CD8-positive, alpha-beta memory T cell (primary cell): ENCODE measurements at regions of chr14 and their contacts with region 1.

Region 1: GRCh38 chr14:35365130-35366055 is 39.2 kb downstream of the NFKBIA start:
- DNase-seq: peak in 1 of 5 donors; percentile 60
- H3K4me3 ChIP-seq: no peak overlapping the region
- H3K4me3 Mint-ChIP-seq: no peak overlapping the region
- H3K27ac ChIP-seq: peak overlapping the region; percentile 54
- H3K27ac Mint-ChIP-seq: peak overlapping the region in 4 of 8 donors; percentile 56 to 72 (median 60)
- H3K4me1 ChIP-seq: peaks cover 27% of the 10 kb centered on the region
- H3K4me1 Mint-ChIP-seq: peaks cover 24 to 38% (median 28%) of the 10 kb centered on the region in 3 donors
- H3K27me3 ChIP-seq: no peaks in the 10 kb centered on the region
- H3K27me3 Mint-ChIP-seq: no peaks in the 10 kb centered on the region

Region 2: DNA sequence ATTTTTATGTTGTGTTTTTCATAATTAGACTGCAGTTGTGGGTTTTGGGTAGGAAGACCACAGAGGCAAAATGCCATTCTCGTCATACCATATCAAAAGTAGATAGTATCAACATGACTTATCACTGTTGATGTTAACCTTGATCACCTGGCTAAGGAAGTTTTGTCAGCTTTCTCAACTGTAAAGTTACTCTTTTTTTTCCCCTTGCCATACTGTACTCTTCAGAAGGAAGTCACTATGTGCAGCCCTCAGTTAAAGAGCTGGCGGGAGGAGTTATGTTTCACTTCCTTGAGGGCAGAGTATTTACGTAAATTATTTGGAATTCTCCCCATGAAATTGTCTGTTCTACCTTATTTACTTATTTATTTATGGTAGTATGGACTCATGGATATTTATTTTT is 164.3 kb before region 1 on chr14:
- CTCF ChIA-PET with region 1: no interaction called
- POLR2A ChIA-PET with region 1: no interaction called
- DNase-seq: peak in 2 of 5 donors; percentile 7 to 10
- H3K4me3 ChIP-seq: no peak overlapping the region
- H3K4me3 Mint-ChIP-seq: peak overlapping the region in 5 of 7 donors; percentile 8 to 57 (median 54)
- H3K27ac ChIP-seq: no peak overlapping the region
- H3K27ac Mint-ChIP-seq: peak overlapping the region in 7 of 8 donors; percentile 70 to 86 (median 82)
- H3K4me1 ChIP-seq: peaks cover 50% of the 10 kb centered on the region
- H3K4me1 Mint-ChIP-seq: peaks cover 44 to 61% (median 59%) of the 10 kb centered on the region in 3 donors
- H3K27me3 ChIP-seq: no peaks in the 10 kb centered on the region
- H3K27me3 Mint-ChIP-seq: no peaks in the 10 kb centered on the region

Region 3: DNA sequence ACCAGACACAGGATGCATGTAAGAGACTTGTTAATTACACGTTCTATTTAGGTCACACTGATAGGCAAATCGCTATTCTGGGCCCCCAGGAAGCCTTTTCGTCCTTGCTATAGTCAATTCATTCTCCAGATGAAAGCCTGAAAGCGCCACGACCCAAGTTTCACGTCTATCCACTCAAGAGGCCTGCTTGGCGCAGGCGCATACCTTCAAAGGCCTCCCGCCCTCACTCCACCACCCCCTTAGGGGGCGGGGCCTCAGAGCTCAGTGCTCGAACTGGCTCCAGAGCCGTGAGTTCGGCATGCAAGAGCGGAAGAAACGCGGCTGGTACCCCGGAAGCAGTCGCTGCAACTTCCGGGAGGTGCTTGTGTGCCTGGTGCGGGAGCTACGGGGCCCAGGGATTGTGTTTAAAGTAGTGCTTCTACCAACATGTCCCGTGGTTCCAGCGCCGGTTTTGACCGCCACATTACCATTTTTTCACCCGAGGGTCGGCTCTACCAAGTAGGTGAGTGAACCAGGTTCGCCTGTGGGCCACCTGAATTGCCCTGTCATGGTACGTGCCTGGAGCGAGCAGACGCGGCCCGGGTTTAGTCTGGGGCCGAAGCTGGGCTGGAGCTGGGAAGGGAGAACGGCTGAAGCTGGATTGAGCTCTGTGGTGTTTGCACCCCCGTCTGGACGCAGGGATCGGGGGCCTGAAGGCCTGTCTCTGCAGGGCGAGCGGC is 73.2 kb before region 1 on chr14 and contains the start of gene PSMA6:
- CTCF ChIA-PET with region 1: no interaction called
- POLR2A ChIA-PET with region 1: no interaction called
- DNase-seq: peak; percentile 98 to 99 (median 99)
- H3K4me3 ChIP-seq: peak within 1 kb of the TSS; percentile 96
- H3K4me3 Mint-ChIP-seq: peak within 1 kb of the TSS; percentile 90 to 99 (median 97)
- H3K27ac ChIP-seq: peak within 1 kb of the TSS; percentile 92
- H3K27ac Mint-ChIP-seq: peak within 1 kb of the TSS; percentile 94 to 99 (median 98)
- H3K4me1 ChIP-seq: peaks cover 40% of the 10 kb centered on the region
- H3K4me1 Mint-ChIP-seq: peaks cover 51 to 59% (median 57%) of the 10 kb centered on the region in 3 donors
- H3K27me3 ChIP-seq: no peaks in the 10 kb centered on the region
- H3K27me3 Mint-ChIP-seq: no peaks in the 10 kb centered on the region
- total RNA-seq, gene PSMA6: 399 to 400 TPM

Region 4: DNA sequence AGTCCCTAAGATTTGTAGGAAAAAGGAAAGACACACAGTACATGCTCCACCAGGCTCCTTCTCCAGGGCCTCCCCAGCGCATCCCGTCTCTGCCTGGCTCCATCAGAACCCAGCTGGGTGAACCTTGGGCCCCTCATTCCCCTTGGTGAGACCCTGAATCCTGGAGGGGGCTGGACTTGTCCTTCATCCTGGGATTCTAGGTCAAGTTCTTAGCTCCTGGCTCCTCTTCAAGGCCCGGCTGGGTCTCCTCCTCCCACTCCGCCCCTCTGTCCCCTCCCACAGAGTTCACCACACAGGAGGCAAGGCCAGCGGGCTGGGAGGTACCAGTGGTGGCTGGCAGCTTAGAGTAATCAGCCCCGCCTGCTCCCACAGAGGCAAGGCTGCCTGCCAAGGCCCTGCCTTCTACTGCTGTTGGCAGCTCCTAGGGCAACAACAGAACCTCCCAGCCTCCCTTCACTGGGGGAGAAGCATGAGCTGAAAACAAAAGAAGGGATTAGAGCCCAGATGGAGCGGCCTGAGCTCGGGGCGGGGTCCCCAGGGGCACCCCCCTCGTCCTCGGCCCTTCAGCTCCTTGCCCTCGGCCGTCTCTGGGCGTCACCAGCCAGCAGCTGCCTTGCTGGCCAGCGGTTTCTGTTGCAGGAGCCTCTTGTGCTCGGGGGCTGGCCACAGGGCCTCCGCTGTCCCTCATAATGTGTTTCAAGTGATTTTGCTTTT is 23.8 kb before region 1 on chr14:
- CTCF ChIA-PET with region 1: interaction called, 4 read pairs
- POLR2A ChIA-PET with region 1: interaction called, 10 read pairs
- DNase-seq: peak in 2 of 5 donors; percentile 30 to 45
- H3K4me3 ChIP-seq: no peak overlapping the region
- H3K4me3 Mint-ChIP-seq: peak overlapping the region in 1 of 7 donors; percentile 23
- H3K27ac ChIP-seq: no peak overlapping the region
- H3K27ac Mint-ChIP-seq: peak overlapping the region in 2 of 8 donors; percentile 52 to 63
- H3K4me1 ChIP-seq: no peaks in the 10 kb centered on the region
- H3K4me1 Mint-ChIP-seq: peaks cover 0 to 18% (median 2%) of the 10 kb centered on the region in 3 donors
- H3K27me3 ChIP-seq: no peaks in the 10 kb centered on the region
- H3K27me3 Mint-ChIP-seq: peaks cover 0 to 2% of the 10 kb centered on the region in 2 donors

Region 5: GRCh38 chr14:35425850-35426249 is 60.5 kb after region 1 on chr14:
- CTCF ChIA-PET with region 1: no interaction called
- POLR2A ChIA-PET with region 1: no interaction called
- DNase-seq: no peak
- H3K4me3 ChIP-seq: no peak overlapping the region
- H3K4me3 Mint-ChIP-seq: no peak overlapping the region
- H3K27ac ChIP-seq: no peak overlapping the region
- H3K27ac Mint-ChIP-seq: peak overlapping the region in 1 of 8 donors; percentile 3
- H3K4me1 ChIP-seq: peaks cover 7% of the 10 kb centered on the region
- H3K4me1 Mint-ChIP-seq: peaks cover 6 to 16% (median 7%) of the 10 kb centered on the region in 3 donors
- H3K27me3 ChIP-seq: no peaks in the 10 kb centered on the region
- H3K27me3 Mint-ChIP-seq: peaks cover 0 to 1% of the 10 kb centered on the region in 2 donors